Natural killer cell (primary cell): ENCODE measurements at regions of chr1 and their contacts with region 1.

Region 1: GRCh38 chr1:155859234-155859829 is at the start of gene SYT11:
- DNase-seq: peak; percentile 83 to 98
- ATAC-seq: peak; percentile 71 to 87 (median 74)
- H3K4me3 ChIP-seq: peak within 1 kb of the TSS; percentile 53
- H3K4me3 Mint-ChIP-seq: peak within 1 kb of the TSS; percentile 95
- H3K27ac ChIP-seq: peak within 1 kb of the TSS; percentile 86
- H3K27ac Mint-ChIP-seq: peak within 1 kb of the TSS; percentile 95 to 99
- H3K4me1 ChIP-seq: peaks cover 33% of the 10 kb centered on the region
- H3K4me1 Mint-ChIP-seq: peaks cover 44% of the 10 kb centered on the region in 2 donors
- H3K27me3 ChIP-seq: no peaks in the 10 kb centered on the region
- H3K27me3 Mint-ChIP-seq: no peaks in the 10 kb centered on the region
- CTCF ChIP-seq: no peak
- total RNA-seq, gene SYT11: 38.1 to 42.8 (median 39.8) TPM

Region 2: GRCh38 chr1:155934097-155934935 is 75.0 kb after region 1 on chr1 and contains the start of gene KHDC4:
- intact Hi-C with region 1: loop called (anchors 2 kb)
- DNase-seq: peak; percentile 91 to 99
- ATAC-seq: peak; percentile 92 to 98 (median 93)
- H3K4me3 ChIP-seq: peak within 1 kb of the TSS; percentile 93
- H3K4me3 Mint-ChIP-seq: no peak within 1 kb of the TSS
- H3K27ac ChIP-seq: peak within 1 kb of the TSS; percentile 92
- H3K27ac Mint-ChIP-seq: no peak within 1 kb of the TSS
- H3K4me1 ChIP-seq: peaks cover 31% of the 10 kb centered on the region
- H3K4me1 Mint-ChIP-seq: peaks cover 19 to 21% of the 10 kb centered on the region in 2 donors
- H3K27me3 ChIP-seq: no peaks in the 10 kb centered on the region
- H3K27me3 Mint-ChIP-seq: no peaks in the 10 kb centered on the region
- CTCF ChIP-seq: peak; percentile 21
- total RNA-seq, gene KHDC4: 61.9 to 101 (median 85.9) TPM

Region 3: DNA sequence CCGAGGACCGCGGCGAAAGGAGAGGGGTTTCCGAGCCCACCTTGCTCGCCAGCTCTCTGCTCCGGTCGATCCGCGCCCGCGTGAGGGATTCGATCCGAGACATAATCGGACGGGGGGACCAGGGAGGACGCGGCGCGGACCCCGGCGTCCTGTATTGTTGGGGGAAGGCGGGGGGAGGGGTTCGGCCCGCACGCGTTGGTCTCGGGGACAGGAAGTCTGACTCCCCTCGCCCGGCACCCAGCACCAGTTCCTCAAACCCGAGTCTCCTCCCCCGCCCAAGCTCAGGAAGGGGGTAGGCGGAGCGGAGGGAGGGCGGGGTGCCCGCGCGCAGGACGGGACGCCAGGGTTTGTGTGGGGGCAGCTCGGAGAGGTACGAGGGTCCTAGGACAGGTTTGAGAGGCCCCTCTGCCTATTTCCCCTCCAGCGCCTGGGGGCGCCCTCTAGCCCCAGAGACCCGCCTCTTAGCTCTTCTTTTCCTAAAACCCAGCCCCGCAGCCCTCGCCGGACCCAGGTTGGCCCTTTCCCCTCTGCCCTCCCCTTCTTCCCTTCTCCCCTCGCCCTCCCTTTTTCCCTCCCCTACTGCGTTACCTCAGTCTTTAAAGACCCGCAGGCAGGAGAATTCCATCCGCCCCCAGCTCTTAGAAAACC is 119.1 kb after region 1 on chr1 and contains the start of gene ARHGEF2:
- intact Hi-C with region 1: loop called (anchors 5 kb)
- DNase-seq: peak; percentile 67 to 83
- ATAC-seq: peak; percentile 55 to 75 (median 60)
- H3K4me3 ChIP-seq: peak within 1 kb of the TSS; percentile 96
- H3K4me3 Mint-ChIP-seq: peak within 1 kb of the TSS; percentile 92
- H3K27ac ChIP-seq: peak within 1 kb of the TSS; percentile 79
- H3K27ac Mint-ChIP-seq: peak within 1 kb of the TSS; percentile 90 to 94
- H3K4me1 ChIP-seq: peaks cover 83% of the 10 kb centered on the region
- H3K4me1 Mint-ChIP-seq: peaks cover 73 to 85% of the 10 kb centered on the region in 2 donors
- H3K27me3 ChIP-seq: no peaks in the 10 kb centered on the region
- H3K27me3 Mint-ChIP-seq: no peaks in the 10 kb centered on the region
- CTCF ChIP-seq: no peak
- total RNA-seq, gene ARHGEF2: 143 to 200 (median 147) TPM

Region 4: GRCh38 chr1:156054500-156055280 is 195.4 kb after region 1 on chr1 and contains the start of gene LAMTOR2:
- intact Hi-C with region 1: loop called (anchors 1 kb)
- DNase-seq: peak; percentile 93 to 95
- ATAC-seq: peak; percentile 78 to 91 (median 83)
- H3K4me3 ChIP-seq: peak within 1 kb of the TSS; percentile 70
- H3K4me3 Mint-ChIP-seq: peak within 1 kb of the TSS; percentile 98
- H3K27ac ChIP-seq: peak within 1 kb of the TSS; percentile 84
- H3K27ac Mint-ChIP-seq: peak within 1 kb of the TSS; percentile 89 to 93
- H3K4me1 ChIP-seq: peaks cover 27% of the 10 kb centered on the region
- H3K4me1 Mint-ChIP-seq: peaks cover 31 to 33% of the 10 kb centered on the region in 2 donors
- H3K27me3 ChIP-seq: no peaks in the 10 kb centered on the region
- H3K27me3 Mint-ChIP-seq: no peaks in the 10 kb centered on the region
- CTCF ChIP-seq: no peak
- total RNA-seq, gene LAMTOR2: 23.5 to 26.1 (median 24.6) TPM